Activated naive CD8-positive, alpha-beta T cell treated with anti-CD3 and anti-CD28 coated beads, Interleukin-2, amount 10 ng/mL, durations not matched to agents 7 days and 5 days (primary cell): ENCODE measurements at regions of chr22 and their contacts with region 1.

Region 1: GRCh38 chr22:17171313-17172171 is 12.5 kb upstream of the HDHD5 start:
- DNase-seq: peak; percentile 88
- ATAC-seq: peak; percentile 95
- H3K4me3 Mint-ChIP-seq: peak overlapping the region; percentile 78
- H3K27ac Mint-ChIP-seq: peak overlapping the region; percentile 70
- H3K4me1 Mint-ChIP-seq: peaks cover 5% of the 10 kb centered on the region
- H3K27me3 Mint-ChIP-seq: peaks cover 13% of the 10 kb centered on the region

Region 2: DNA sequence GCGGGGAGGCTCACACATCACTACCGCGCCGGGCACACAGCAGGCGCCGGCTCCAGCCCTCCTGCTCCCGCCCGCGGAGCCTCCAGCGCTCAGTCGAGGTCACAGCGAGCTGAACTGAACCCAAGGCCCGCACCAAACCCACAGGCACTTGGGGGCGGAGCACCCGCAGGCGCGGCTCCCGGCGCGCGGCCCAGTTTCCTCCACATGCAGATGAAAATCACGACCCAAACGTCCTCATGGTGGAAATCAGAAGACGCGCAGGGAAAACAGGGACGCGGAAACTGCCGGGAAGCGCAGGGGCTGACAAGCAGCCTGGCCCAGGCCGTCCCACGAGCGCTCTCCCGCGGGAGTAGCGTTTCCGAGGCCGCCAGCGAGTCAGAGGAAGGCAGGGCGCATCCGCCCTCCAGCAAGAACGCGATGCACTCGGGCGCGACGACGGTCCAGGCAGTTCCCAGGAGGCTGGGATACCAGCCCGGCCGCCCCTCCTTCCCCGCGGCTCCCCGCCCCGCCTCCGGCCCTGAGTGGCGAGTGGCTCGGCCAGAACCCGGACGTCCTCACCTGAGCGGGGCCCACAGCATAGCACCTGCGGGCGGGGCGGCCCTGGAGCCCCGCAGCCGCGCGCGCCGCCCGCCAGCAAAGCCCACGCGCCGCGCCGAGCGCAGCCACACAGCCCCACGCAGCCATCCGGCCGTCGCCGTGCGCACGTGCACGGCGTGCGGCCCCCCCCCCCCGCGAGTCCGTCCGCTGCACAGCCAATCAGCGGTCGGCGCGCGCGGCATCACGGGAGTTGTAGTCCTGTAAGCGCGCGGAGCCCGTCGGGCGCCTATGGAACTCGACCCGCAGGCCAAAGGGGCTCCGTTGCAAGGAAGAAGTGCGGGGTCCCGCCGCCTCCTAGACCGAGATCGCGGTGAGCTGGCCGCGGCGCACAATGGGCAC is 12.7 kb before region 1 on chr22 and contains the start of gene HDHD5:
- POLR2A ChIA-PET with region 1: interaction called, 12 read pairs
- DNase-seq: peak; percentile 89
- ATAC-seq: peak; percentile 85
- H3K4me3 Mint-ChIP-seq: peak within 1 kb of the TSS; percentile 84
- H3K27ac Mint-ChIP-seq: peak within 1 kb of the TSS; percentile 76
- H3K4me1 Mint-ChIP-seq: peaks cover 25% of the 10 kb centered on the region
- H3K27me3 Mint-ChIP-seq: no peaks in the 10 kb centered on the region
- total RNA-seq, gene HDHD5: 33.7 to 34.7 TPM

Region 3: GRCh38 chr22:17501679-17502285 is 330.2 kb after region 1 on chr22:
- POLR2A ChIA-PET with region 1: interaction called, 10 read pairs
- DNase-seq: no peak
- ATAC-seq: peak; percentile 68
- H3K4me3 Mint-ChIP-seq: no peak overlapping the region
- H3K27ac Mint-ChIP-seq: no peak overlapping the region
- H3K4me1 Mint-ChIP-seq: peaks cover 1% of the 10 kb centered on the region
- H3K27me3 Mint-ChIP-seq: peaks cover 8% of the 10 kb centered on the region